Activated CD4-positive, alpha-beta T cell treated with anti-CD3 and anti-CD28 coated beads for 36 hours (primary cell): ENCODE measurements at regions of chrX and their contacts with region 1.

Region 1: DNA sequence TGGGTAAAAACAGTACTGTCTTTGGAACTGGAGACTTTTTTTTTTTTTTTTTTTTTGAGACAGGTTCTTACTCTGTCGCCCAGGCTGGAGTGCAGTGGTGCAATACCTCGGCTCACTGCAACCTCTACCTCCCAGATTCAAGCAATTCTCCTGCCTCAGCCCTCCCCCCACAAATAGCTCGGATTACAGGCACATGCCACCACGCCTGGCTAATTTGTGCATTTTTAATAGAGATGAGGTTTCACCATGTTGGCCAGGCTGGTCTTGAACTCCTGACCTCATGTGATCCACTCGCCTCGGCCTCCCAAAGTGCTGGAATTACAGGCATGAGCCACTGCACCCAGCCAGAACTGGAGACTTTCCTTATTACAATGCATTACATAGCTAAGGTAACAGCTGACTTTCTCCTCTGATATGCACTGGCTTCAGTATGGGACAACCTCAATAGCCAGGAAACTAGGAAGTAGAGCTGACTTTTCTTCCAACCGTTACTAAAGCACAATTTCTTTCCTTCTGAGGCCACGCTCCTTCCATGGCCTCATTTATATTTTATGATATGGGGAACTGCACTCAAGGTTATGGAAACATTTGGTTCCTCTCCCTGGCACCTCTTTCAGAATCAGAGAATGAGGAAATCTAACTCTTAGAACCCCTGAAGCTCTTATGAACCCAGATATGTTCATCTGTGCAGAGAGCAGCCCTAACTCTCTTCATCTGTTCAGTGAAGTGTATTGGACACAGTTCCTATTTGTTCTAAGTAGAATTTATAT is 53.5 kb upstream of the FAM9B start:
- DNase-seq: no peak
- ATAC-seq: no peak
- H3K4me3 Mint-ChIP-seq: no peak overlapping the region
- H3K27ac Mint-ChIP-seq: no peak overlapping the region
- H3K4me1 Mint-ChIP-seq: peaks cover 3% of the 10 kb centered on the region
- H3K27me3 Mint-ChIP-seq: no peaks in the 10 kb centered on the region

Region 2: GRCh38 chrX:8668813-8669212 is 418.6 kb before region 1 on chrX:
- CTCF ChIA-PET with region 1: no interaction called
- POLR2A ChIA-PET with region 1: no interaction called
- intact Hi-C with region 1: loop called in 1 of 2 experiments (anchors 10 kb)
- DNase-seq: no peak
- ATAC-seq: no peak
- H3K4me3 Mint-ChIP-seq: no peak overlapping the region
- H3K27ac Mint-ChIP-seq: no peak overlapping the region
- H3K4me1 Mint-ChIP-seq: no peaks in the 10 kb centered on the region
- H3K27me3 Mint-ChIP-seq: no peaks in the 10 kb centered on the region